Pancreas (tissue), 10 donors: ENCODE measurements at regions of chr3 and their contacts with region 1.

Region 1: GRCh38 chr3:8436718-8437184 is 64.9 kb upstream of the LMCD1 start:
- DNase-seq: no peak
- ATAC-seq: no peak
- H3K4me3 ChIP-seq: no peak overlapping the region
- H3K27ac ChIP-seq: no peak overlapping the region
- H3K4me1 ChIP-seq: no peaks in the 10 kb centered on the region
- H3K27me3 ChIP-seq: no peaks in the 10 kb centered on the region
- CTCF ChIP-seq: no peak

Region 2: DNA sequence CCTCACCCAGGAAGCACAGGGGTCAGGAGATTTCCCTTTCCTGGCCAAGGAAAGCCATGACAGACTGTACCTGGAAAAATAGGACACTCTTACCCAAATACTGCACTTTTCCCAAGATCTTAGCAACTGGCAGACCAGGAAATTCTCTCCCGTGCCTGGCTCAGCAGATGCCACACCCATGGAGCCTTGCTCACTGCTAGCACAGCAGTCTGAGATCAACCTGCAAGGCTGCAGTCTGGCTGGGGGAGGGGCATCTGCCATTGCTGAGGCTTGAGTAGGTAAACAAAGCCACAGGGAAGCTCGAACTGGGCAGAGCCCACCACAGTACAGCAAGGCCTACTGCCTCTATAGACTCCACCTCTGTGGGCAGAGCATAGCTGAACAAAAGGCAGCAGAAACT is 502.4 kb before region 1 on chr3:
- intact Hi-C with region 1: no loop called
- DNase-seq: no peak
- ATAC-seq: no peak
- H3K4me3 ChIP-seq: no peak overlapping the region
- H3K27ac ChIP-seq: no peak overlapping the region
- H3K4me1 ChIP-seq: no peaks in the 10 kb centered on the region
- H3K27me3 ChIP-seq: no peaks in the 10 kb centered on the region
- CTCF ChIP-seq: no peak

Region 3: DNA sequence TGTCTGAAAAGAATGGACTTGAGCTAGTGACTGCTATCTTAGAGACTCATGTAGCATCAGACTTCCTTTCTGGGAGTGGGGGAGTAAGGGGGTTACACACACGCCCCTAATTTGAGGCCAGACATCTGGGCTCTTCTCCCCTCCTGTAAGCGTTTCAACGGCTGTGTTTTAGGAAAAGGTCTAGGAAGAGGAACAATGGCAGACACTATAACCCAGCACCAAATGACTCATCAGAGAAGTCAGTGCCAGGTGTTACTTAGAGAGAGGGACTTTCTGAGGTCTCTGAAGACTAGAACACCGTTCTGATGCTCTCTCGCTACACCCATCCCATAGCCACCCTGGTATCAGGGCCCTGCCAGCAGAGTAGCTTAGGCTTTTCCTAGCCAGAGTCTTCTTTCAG is 142.3 kb after region 1 on chr3:
- intact Hi-C with region 1: no loop called
- DNase-seq: no peak
- ATAC-seq: no peak
- H3K4me3 ChIP-seq: no peak overlapping the region
- H3K27ac ChIP-seq: no peak overlapping the region
- H3K4me1 ChIP-seq: no peaks in the 10 kb centered on the region
- H3K27me3 ChIP-seq: no peaks in the 10 kb centered on the region
- CTCF ChIP-seq: no peak

Region 4: GRCh38 chr3:8622873-8623691 is 186.3 kb after region 1 on chr3:
- intact Hi-C with region 1: loop called in 2 of 3 experiments (anchors 5 to 10 kb)
- DNase-seq: peak; percentile 46 to 84 (median 68)
- ATAC-seq: peak; percentile 93 to 97 (median 94)
- H3K4me3 ChIP-seq: no peak overlapping the region
- H3K27ac ChIP-seq: no peak overlapping the region
- H3K4me1 ChIP-seq: no peaks in the 10 kb centered on the region
- H3K27me3 ChIP-seq: no peaks in the 10 kb centered on the region
- CTCF ChIP-seq: peak; percentile 77 to 91 (median 87)